ENCODE measurements at regions of chr16 and their contacts with region 1.

Region 1: DNA sequence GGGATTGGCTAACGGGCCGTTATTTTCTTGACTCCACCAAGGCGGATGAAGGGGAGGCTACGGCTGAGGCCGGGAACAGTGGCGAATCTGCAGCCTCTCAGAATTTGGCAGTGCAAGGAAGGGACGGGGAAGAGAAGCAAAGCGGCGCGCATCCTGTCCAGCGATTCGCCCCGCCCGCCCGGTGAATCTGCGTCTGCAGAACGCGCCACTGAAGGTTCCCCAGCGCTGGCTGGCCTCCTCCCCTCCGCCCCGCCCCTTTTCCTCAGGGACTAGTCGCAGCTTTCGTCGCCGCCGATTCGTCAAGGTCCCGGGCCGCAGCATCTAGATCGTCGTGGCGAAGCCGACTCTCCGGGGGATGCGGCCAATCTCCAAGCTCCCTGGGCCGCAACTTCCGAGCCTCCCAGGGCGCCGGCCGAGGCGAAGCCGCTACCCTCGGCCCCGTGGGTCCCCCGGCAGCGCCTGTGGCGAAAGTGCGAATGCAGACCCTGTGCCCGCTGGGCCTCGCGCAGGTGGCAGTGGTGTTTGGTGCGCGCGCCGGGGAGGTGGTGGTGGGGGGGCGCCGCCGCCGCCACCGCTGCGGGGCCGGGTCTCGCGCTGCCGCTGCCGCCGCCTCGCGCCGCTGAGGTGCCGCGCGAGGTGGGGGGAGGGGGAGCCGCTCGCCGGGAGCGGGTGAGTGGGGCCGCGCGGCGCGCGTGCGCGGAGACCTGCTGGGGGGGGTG is at the start of gene SETD1A:
- DNase-seq: peak; percentile 93
- H3K4me3 Mint-ChIP-seq: peak within 1 kb of the TSS; percentile 96
- H3K27ac Mint-ChIP-seq: peak within 1 kb of the TSS; percentile 97
- H3K4me1 Mint-ChIP-seq: peaks cover 28% of the 10 kb centered on the region
- H3K27me3 Mint-ChIP-seq: no peaks in the 10 kb centered on the region
- total RNA-seq, gene SETD1A: 34.0 and 38.8 TPM in 2 replicates

Region 2: DNA sequence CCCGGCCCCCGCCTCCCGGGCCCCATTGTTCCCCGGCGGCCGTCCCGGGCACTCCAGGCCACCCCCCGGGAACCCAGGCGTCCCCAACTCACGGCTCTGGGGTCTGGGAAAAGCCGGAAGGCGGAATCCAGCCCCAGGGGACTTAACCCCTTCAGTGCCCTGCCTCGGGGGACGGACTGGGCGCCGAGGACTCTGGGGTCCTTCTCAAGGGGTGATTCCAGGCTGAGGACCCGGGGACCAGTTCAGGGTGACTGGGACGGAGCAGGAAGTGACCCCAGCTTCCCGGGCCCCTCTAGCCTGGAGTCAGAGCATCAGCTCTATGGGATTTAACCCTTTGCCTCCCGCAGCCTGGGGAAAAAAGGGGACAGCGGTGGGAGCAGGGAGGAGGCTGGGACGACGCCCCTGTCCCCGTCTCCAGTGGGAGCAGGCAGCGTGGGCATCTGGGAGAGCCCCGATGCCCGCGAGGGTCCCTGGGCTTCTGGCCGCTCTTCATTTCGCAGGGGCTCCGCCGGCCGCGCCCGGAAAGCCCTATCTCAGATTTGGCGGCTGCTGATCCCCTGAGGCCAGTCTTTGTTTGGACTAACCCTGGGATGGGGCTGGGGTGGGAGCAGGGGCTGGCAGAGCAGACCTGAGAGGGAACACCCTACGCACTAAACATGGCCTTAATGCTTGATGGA is 170.5 kb before region 1 on chr16 and contains the start of gene ZNF629:
- intact Hi-C with region 1: no loop called
- DNase-seq: no peak
- H3K4me3 Mint-ChIP-seq: peak within 1 kb of the TSS; percentile 78
- H3K27ac Mint-ChIP-seq: no peak within 1 kb of the TSS
- H3K4me1 Mint-ChIP-seq: no peaks in the 10 kb centered on the region
- H3K27me3 Mint-ChIP-seq: peaks cover 36% of the 10 kb centered on the region
- total RNA-seq, gene ZNF629: 2.7 and 3.2 TPM in 2 replicates

Region 3: GRCh38 chr16:30844671-30845449 is 112.8 kb before region 1 on chr16:
- intact Hi-C with region 1: loop called (anchors 1 kb)
- DNase-seq: peak; percentile 77
- H3K4me3 Mint-ChIP-seq: no peak overlapping the region
- H3K27ac Mint-ChIP-seq: peak overlapping the region; percentile 13
- H3K4me1 Mint-ChIP-seq: peaks cover 12% of the 10 kb centered on the region
- H3K27me3 Mint-ChIP-seq: peaks cover 1% of the 10 kb centered on the region

Region 4: DNA sequence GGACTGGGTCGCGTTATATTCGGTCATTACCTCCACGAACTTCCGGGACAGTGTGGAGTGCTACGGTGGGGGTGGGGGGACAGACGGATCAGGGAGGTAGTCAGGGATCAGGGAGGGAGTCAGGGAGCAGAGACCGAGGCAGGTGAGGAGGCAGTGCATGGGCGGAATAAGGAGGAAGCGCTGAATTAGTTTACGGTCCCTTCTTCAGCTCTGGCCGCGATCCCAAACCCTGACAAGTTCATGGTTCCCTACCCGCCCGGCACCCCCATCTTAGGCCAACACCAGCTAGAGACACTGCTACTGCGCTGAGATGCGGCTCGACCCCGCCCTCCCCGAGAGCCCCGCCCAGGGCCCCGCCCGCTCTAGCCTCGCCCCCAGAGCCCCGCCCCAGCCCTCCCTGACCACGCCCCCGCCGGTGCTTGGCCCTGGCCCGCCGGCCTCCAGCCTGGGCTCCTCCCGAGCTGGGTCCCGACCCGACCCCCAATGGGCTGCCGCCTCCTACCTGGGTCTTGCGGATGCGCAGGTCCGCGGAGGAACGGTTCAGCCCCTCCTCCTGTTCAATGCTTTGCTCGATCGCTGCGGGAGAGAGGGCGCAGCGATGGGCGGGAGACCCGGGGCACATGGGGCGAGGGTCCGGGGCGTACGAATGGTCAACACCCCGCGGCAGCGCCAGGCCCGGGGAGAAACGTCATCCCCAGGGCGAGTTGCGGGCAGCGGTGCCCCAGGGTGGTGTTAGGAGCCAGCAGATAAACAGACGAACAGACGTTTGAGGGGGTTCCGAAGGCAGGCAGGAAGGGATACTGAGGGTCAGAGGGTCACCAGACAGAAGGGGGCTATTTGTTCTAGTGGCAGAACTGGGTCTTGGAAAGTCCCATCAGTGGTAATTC is 39.6 kb after region 1 on chr16:
- intact Hi-C with region 1: loop called (anchors 1 kb)
- DNase-seq: peak; percentile 66
- H3K4me3 Mint-ChIP-seq: peak overlapping the region; percentile 74
- H3K27ac Mint-ChIP-seq: peak overlapping the region; percentile 44
- H3K4me1 Mint-ChIP-seq: peaks cover 11% of the 10 kb centered on the region
- H3K27me3 Mint-ChIP-seq: peaks cover 18% of the 10 kb centered on the region

Region 5: GRCh38 chr16:31094424-31095120 is 137.0 kb after region 1 on chr16 and contains the start of gene VKORC1:
- intact Hi-C with region 1: loop called (anchors 1 kb)
- DNase-seq: peak; percentile 84
- H3K4me3 Mint-ChIP-seq: peak within 1 kb of the TSS; percentile 95
- H3K27ac Mint-ChIP-seq: peak within 1 kb of the TSS; percentile 82
- H3K4me1 Mint-ChIP-seq: peaks cover 27% of the 10 kb centered on the region
- H3K27me3 Mint-ChIP-seq: no peaks in the 10 kb centered on the region
- total RNA-seq, gene VKORC1: 47.3 and 53.0 TPM in 2 replicates

Region 6: DNA sequence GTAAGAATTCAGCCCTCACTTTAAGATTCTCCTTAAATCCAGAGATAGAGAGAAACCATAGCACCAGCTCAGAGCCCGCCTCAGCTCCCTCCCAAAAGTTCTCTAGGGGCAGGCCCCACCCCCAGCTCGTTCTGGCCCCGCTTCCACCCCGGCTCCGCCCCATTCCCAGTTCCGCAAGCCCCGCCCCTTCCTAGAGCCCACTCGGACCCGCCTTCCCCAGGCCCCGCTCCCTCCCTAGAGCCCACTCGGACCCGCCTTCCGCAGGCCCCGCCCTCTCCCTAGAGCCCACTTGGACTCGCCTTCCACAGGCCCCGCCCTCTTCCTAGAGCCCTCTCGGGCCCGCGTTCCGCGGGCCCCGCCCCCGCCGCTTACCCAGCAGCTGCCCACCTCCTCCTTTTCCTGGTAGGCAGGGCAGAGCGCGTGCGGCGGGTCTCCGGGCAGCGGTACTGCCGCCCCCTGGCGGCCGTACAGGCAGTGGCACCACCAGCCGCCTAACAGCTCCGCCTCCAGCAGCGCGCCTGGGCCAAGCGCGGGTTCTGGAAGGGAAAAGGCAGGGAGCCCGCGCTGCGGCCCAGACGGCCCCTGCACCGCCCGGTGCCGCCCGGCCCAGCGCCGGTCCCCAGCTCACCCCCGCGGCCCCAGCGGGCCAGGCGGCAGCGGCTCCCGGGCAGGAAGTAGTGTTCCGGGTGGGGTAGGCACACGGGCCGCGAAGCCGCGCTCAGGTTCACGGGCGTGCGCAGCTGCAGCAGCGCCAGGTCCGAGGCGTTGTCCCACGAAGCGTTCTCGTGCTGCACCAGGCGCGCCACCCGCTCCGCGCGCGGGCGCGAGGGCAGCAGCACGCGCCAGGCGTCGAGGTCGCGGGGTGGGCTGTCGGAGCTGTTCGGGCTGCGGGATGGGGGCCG is 184.7 kb after region 1 on chr16:
- intact Hi-C with region 1: loop called (anchors 1 kb)
- DNase-seq: peak; percentile 98
- H3K4me3 Mint-ChIP-seq: peak overlapping the region; percentile 78
- H3K27ac Mint-ChIP-seq: peak overlapping the region; percentile 88
- H3K4me1 Mint-ChIP-seq: peaks cover 12% of the 10 kb centered on the region
- H3K27me3 Mint-ChIP-seq: peaks cover 13% of the 10 kb centered on the region

Region 7: GRCh38 chr16:31529398-31530312 is 572.0 kb after region 1 on chr16:
- intact Hi-C with region 1: no loop called
- DNase-seq: no peak
- H3K4me3 Mint-ChIP-seq: no peak overlapping the region
- H3K27ac Mint-ChIP-seq: no peak overlapping the region
- H3K4me1 Mint-ChIP-seq: no peaks in the 10 kb centered on the region
- H3K27me3 Mint-ChIP-seq: peaks cover 12% of the 10 kb centered on the region

Measured in activated T-helper 1 cell treated with anti-CD3 and anti-CD28 coated beads, Interleukin-12 subunit alpha, Interleukin-12 subunit beta, Interleukin-2, Interleukin-4 antibody, amounts not matched to agents 30 ng/mL and 10 ng/mL and 1 ng/mL, durations not matched to agents 14 hours and 24 hours and 36 hours (primary cell).